OCI-LY7 (cell line): ENCODE measurements at regions of chr5 and their contacts with region 1.

Region 1: GRCh38 chr5:66655395-66656324 is 59.5 kb downstream of the MAST4 start:
- DNase-seq: no peak
- H3K4me3 ChIP-seq: no peak overlapping the region
- H3K27ac ChIP-seq: no peak overlapping the region
- H3K4me1 ChIP-seq: no peaks in the 10 kb centered on the region
- CTCF ChIP-seq: no peak

Region 2: GRCh38 chr5:66595756-66596635 is 59.7 kb before region 1 on chr5 and contains the start of gene MAST4:
- CTCF ChIA-PET with region 1: no interaction called
- POLR2A ChIA-PET with region 1: no interaction called
- intact Hi-C with region 1: loop called (anchors 5 kb)
- DNase-seq: peak; percentile 83
- H3K4me3 ChIP-seq: peak within 1 kb of the TSS; percentile 73
- H3K27ac ChIP-seq: no peak within 1 kb of the TSS
- H3K4me1 ChIP-seq: no peaks in the 10 kb centered on the region
- CTCF ChIP-seq: no peak
- total RNA-seq, gene MAST4: 0.85 and 1.3 TPM in 2 replicates

Region 3: DNA sequence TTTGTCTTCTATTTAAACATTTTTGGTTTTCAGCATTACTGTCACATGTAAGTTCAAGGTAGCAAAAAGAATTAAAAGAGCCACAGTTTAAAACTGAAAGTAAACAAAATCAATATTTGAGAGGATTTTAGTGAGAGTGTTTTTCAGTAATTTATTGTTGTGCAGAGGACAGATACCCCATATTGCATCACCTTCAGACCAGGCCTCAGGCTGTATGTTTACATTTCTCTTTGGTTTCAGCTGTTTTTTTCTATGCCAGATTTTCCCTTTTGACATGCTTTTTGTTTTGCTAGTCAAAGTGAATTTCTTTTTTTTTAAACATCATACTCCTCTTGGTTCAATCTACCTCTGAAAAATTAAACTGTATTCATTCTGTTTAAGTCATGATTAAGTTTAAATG is 12.3 kb before region 1 on chr5:
- CTCF ChIA-PET with region 1: interaction called, 3 read pairs
- POLR2A ChIA-PET with region 1: interaction called, 10 read pairs
- intact Hi-C with region 1: no loop called
- DNase-seq: no peak
- H3K4me3 ChIP-seq: no peak overlapping the region
- H3K27ac ChIP-seq: no peak overlapping the region
- H3K4me1 ChIP-seq: no peaks in the 10 kb centered on the region
- CTCF ChIP-seq: no peak

Region 4: DNA sequence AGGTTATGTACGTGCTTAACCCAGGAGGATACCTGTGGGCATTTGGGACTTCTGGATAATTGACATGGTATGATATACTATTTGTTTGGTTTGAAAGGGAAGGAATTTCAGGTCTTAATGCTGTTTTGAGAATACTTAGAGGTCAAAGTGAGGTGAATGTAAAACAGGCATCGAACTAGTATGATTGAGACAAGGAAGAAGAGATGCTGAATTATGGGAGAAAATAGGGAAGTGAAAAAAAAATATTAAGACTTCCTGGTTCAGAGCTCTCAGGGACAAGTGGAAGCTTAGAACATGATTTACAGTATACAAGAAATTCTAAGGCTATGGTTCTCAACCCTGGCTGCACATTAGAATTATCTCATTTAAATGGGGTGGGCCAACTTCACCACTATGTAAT is 425.6 kb after region 1 on chr5:
- CTCF ChIA-PET with region 1: no interaction called
- POLR2A ChIA-PET with region 1: no interaction called
- intact Hi-C with region 1: no loop called
- DNase-seq: no peak
- H3K4me3 ChIP-seq: no peak overlapping the region
- H3K27ac ChIP-seq: no peak overlapping the region
- H3K4me1 ChIP-seq: no peaks in the 10 kb centered on the region
- CTCF ChIP-seq: no peak